Esophagus muscularis mucosa (tissue), 4 donors: ENCODE measurements at regions of chr10 and their contacts with region 1.

Region 1: DNA sequence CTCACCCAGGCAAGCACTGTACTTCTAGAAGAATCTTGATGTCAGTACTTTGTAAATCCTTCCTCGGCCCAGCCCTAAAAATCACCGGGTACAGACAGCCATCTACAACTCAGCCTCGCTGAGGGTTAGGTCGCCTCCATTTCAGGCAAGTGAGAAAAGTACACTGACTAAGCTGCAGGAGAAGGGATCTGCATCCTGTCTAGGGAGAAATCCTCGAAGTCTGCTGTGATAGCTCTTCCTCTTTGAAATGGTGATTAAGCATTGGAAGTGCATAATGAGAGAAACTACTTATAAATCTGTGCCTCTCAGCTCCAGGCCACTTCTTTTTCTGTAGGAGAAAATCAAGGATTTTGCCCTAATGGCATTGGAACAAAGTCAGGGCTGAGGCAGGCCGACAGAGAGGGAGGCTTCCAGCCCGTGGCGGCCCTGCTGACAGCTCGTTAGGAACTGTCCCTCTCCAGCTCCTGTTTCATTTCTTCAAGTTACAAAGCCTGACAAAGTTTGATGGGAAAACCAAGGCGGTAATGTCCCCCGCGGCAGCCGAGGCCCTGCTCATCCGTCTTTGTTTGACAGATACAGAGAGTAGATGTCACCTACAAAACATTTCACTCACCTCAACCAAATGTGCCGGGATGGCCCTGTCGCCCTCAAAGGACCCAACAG is 14.1 kb upstream of the GOT1 start:
- DNase-seq: no peak
- H3K4me3 ChIP-seq: no peak overlapping the region
- H3K27ac ChIP-seq: no peak overlapping the region
- H3K4me1 ChIP-seq: peaks cover 0 to 17% (median 14%) of the 10 kb centered on the region in 4 donors
- H3K27me3 ChIP-seq: peaks cover 0 to 4% (median 0%) of the 10 kb centered on the region in 4 donors
- CTCF ChIP-seq: no peak
- EP300 ChIP-seq: no peak
- POLR2A ChIP-seq: no peak

Region 2: DNA sequence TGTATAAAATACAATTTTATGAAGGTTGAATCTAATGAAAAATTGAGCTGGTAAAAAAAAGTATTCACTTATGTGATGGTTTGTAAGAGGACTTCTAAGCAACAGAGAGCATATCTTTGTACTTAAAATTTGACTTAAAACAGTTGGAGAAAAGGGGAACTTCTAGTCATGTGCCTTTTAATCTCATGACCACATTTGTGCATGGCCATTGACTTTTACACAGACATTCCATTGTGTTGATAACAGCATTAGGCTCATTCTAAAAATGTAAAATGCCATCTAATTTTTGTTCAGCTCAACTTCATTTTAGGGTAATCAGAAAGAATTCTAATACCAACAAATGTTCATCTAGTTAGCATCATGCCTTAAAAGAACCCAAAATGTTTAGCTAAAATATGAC is 328.8 kb before region 1 on chr10:
- intact Hi-C with region 1: no loop called
- DNase-seq: no peak
- H3K4me3 ChIP-seq: no peak overlapping the region
- H3K27ac ChIP-seq: no peak overlapping the region
- H3K4me1 ChIP-seq: peaks cover 0 to 12% (median 8%) of the 10 kb centered on the region in 4 donors
- H3K27me3 ChIP-seq: no peaks in the 10 kb centered on the region
- CTCF ChIP-seq: no peak
- EP300 ChIP-seq: no peak
- POLR2A ChIP-seq: no peak

Region 3: GRCh38 chr10:99551158-99551557 is 106.6 kb after region 1 on chr10:
- intact Hi-C with region 1: loop called (anchors 10 kb)
- DNase-seq: no peak
- H3K4me3 ChIP-seq: no peak overlapping the region
- H3K27ac ChIP-seq: no peak overlapping the region
- H3K4me1 ChIP-seq: no peaks in the 10 kb centered on the region
- H3K27me3 ChIP-seq: peaks cover 0 to 80% (median 18%) of the 10 kb centered on the region in 4 donors
- CTCF ChIP-seq: no peak
- EP300 ChIP-seq: no peak
- POLR2A ChIP-seq: no peak